Endothelial cell of umbilical vein (primary cell): ENCODE measurements at regions of chr10 and their contacts with region 1.

Region 1: GRCh38 chr10:61404751-61405150 is 48.4 kb downstream of the TMEM26 start:
- DNase-seq: peak; percentile 15
- H3K4me3 ChIP-seq: no peak overlapping the region
- H3K27ac ChIP-seq: no peak overlapping the region
- H3K4me1 ChIP-seq: no peaks in the 10 kb centered on the region
- H3K27me3 ChIP-seq: no peaks in the 10 kb centered on the region
- CTCF ChIP-seq: no peak
- POLR2A ChIP-seq: no peak

Region 2: DNA sequence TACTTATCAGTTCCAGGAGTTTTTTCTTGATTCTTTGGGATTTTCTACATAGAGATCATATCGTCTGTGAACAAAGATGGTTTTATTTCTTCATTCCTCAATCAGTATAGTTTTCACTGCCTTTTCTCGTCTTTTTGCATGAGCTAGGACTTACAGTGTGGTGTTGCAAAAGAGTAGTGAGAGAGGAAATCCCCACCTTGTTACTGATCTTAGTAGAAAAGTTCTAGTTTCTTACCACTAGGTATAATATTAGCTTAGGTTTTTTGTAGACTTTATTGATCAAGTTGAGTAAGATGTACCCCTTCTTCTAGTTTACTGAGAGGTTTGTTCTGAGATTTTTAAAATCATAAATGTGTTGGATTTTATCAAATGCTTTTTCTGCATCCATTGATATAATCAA is 74.9 kb before region 1 on chr10:
- CTCF ChIA-PET with region 1: no interaction called
- POLR2A ChIA-PET with region 1: no interaction called
- dilution Hi-C with region 1: no loop called
- intact Hi-C with region 1: no loop called
- DNase-seq: no peak
- H3K4me3 ChIP-seq: no peak overlapping the region
- H3K27ac ChIP-seq: no peak overlapping the region
- H3K4me1 ChIP-seq: no peaks in the 10 kb centered on the region
- H3K27me3 ChIP-seq: peaks cover 0 to 2% of the 10 kb centered on the region in 2 experiments
- CTCF ChIP-seq: no peak
- POLR2A ChIP-seq: no peak

Region 3: GRCh38 chr10:61529208-61529607 is 124.5 kb after region 1 on chr10:
- CTCF ChIA-PET with region 1: no interaction called
- POLR2A ChIA-PET with region 1: no interaction called
- dilution Hi-C with region 1: no loop called
- intact Hi-C with region 1: loop called (anchors 10 kb)
- DNase-seq: no peak
- H3K4me3 ChIP-seq: no peak overlapping the region
- H3K27ac ChIP-seq: no peak overlapping the region
- H3K4me1 ChIP-seq: no peaks in the 10 kb centered on the region
- H3K27me3 ChIP-seq: no peaks in the 10 kb centered on the region
- CTCF ChIP-seq: no peak
- POLR2A ChIP-seq: no peak

Region 4: GRCh38 chr10:61628875-61629513 is 224.2 kb after region 1 on chr10:
- CTCF ChIA-PET with region 1: no interaction called
- POLR2A ChIA-PET with region 1: no interaction called
- dilution Hi-C with region 1: no loop called
- intact Hi-C with region 1: no loop called
- DNase-seq: peak; percentile 55
- H3K4me3 ChIP-seq: no peak overlapping the region
- H3K27ac ChIP-seq: peak overlapping the region; percentile 22
- H3K4me1 ChIP-seq: peaks cover 18% of the 10 kb centered on the region
- H3K27me3 ChIP-seq: no peaks in the 10 kb centered on the region
- CTCF ChIP-seq: no peak
- POLR2A ChIP-seq: no peak

Region 5: DNA sequence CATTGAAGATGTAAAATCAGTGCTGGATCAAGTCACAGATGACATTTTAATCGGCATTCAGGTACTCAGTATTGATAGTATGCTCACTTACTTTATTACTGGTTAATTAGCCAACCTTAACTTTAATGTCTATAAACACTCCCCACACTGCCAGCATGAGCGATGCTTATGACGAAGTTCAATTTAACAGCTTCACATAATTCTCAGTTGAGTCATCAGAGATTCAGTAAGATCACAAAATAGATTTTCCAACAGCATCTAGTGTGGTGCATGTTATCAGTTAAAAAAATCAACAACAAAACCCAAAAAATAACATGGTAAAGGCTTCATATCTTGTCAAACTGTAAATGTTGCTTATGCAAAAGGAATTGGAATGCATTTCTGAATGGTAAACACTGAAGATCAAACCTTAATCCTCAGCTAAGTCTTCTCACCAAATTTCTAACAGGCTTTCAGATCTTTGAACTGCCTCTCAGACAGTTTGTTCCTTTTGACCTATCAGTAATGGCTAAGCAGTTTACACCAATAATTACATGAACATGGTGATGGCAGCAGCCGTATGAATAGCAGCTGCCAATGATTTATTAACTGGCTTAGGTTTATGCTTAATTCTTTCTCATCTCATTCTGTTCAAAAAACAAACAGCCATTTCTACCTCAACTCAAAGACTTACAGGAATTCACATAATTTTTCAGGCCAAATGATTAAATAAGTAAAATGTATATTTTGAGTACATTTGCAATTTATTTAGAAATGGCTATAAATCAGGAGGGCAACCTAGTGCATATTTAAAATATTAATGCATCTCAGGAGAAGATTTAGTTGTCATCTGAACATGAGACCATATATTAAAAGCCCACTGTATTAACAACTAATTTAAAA is 356.4 kb after region 1 on chr10:
- CTCF ChIA-PET with region 1: no interaction called
- POLR2A ChIA-PET with region 1: no interaction called
- dilution Hi-C with region 1: no loop called
- intact Hi-C with region 1: no loop called
- DNase-seq: peak; percentile 59
- H3K4me3 ChIP-seq: no peak overlapping the region
- H3K27ac ChIP-seq: peak overlapping the region; percentile 22
- H3K4me1 ChIP-seq: peaks cover 14% of the 10 kb centered on the region
- H3K27me3 ChIP-seq: no peaks in the 10 kb centered on the region
- CTCF ChIP-seq: no peak
- POLR2A ChIP-seq: no peak